ENCODE measurements at regions of chr1 and their contacts with region 1.

Region 1: DNA sequence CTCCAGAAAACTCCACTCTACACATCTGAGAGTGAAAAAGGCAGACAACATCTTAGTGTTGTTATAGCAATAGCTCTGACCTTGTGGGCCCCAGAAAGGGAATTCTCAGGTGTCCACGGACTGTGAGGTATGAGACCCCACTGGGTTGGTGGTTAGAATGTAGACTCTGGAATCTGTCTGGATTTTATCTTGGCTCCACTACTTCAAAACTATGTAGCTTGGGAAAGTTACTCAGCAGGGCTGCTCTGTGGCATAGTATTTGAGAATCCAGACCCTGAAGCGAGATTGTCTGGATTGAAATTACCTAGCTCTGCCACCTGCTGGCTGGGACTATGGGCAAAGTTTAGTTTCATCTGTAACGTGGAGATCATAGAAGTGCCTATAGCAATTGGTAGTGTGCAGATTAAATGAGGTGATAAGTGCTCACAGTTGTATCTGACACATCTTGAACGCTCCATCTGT is 25.8 kb downstream of the PRDM2 start:
- DNase-seq: peak; percentile 77
- ATAC-seq: peak; percentile 60
- H3K4me3 Mint-ChIP-seq: no peak overlapping the region
- H3K27ac Mint-ChIP-seq: peak overlapping the region; percentile 21
- H3K4me1 Mint-ChIP-seq: peaks cover 67% of the 10 kb centered on the region
- H3K27me3 Mint-ChIP-seq: no peaks in the 10 kb centered on the region
- CTCF ChIP-seq: peak; percentile 65

Region 2: DNA sequence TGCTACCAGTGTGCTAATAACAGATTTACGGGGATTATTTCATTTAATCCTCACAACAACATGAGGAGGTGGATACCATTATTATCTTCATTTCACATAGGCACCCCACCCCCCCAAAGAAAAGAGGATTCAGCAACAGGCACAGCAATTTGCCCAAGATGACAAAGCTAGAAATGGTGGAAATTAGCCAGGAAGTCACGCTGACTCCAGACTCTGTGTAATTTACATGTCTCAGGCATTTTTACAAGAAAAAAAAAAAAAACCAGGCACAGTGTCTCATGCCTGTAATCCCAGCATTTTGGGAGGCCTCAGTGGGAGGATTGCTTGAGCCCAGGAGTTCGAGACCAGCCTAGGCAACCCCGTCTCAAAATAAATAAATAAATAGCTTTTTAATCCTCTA is 63.3 kb before region 1 on chr1:
- CTCF ChIA-PET with region 1: interaction called, 14 read pairs
- POLR2A ChIA-PET with region 1: no interaction called
- intact Hi-C with region 1: loop called (anchors 1 kb)
- DNase-seq: no peak
- ATAC-seq: no peak
- H3K4me3 Mint-ChIP-seq: no peak overlapping the region
- H3K27ac Mint-ChIP-seq: no peak overlapping the region
- H3K4me1 Mint-ChIP-seq: peaks cover 6% of the 10 kb centered on the region
- H3K27me3 Mint-ChIP-seq: peaks cover 2% of the 10 kb centered on the region
- CTCF ChIP-seq: no peak

Region 3: GRCh38 chr1:13667691-13668090 is 58.1 kb before region 1 on chr1:
- CTCF ChIA-PET with region 1: interaction called, 14 read pairs
- POLR2A ChIA-PET with region 1: no interaction called
- intact Hi-C with region 1: loop called (anchors 1 kb)
- DNase-seq: no peak
- ATAC-seq: no peak
- H3K4me3 Mint-ChIP-seq: no peak overlapping the region
- H3K27ac Mint-ChIP-seq: no peak overlapping the region
- H3K4me1 Mint-ChIP-seq: peaks cover 6% of the 10 kb centered on the region
- H3K27me3 Mint-ChIP-seq: no peaks in the 10 kb centered on the region
- CTCF ChIP-seq: no peak

Region 4: GRCh38 chr1:13699936-13700520 is 25.7 kb before region 1 on chr1 and contains the start of gene PRDM2:
- CTCF ChIA-PET with region 1: interaction called, 16 read pairs
- POLR2A ChIA-PET with region 1: interaction called, 12 read pairs
- intact Hi-C with region 1: loop called (anchors 2 kb)
- DNase-seq: peak; percentile 64
- ATAC-seq: peak; percentile 51
- H3K4me3 Mint-ChIP-seq: peak within 1 kb of the TSS; percentile 95
- H3K27ac Mint-ChIP-seq: peak within 1 kb of the TSS; percentile 99
- H3K4me1 Mint-ChIP-seq: peaks cover 41% of the 10 kb centered on the region
- H3K27me3 Mint-ChIP-seq: no peaks in the 10 kb centered on the region
- CTCF ChIP-seq: no peak
- total RNA-seq, gene PRDM2: 41.2 to 43.6 TPM

Region 5: DNA sequence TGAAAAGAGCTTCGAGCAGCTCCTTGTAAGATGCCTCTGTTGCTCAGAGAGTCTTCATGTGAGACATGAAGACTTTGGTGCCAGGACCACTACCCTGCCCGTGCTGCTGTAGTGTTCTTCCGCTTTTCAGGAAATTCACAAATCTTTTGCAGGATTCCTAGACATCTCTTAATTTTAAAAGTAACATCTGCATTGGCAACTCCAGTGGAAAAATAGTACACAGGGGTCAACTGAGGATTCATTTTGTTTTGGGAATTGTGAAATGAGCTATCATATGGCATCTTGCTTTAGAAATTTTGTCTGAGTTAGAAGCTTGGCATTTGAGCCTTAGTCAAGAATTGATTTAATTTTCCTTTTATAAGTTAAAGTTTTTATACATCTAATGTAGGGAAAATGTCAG is 18.6 kb before region 1 on chr1:
- CTCF ChIA-PET with region 1: interaction called, 16 read pairs
- POLR2A ChIA-PET with region 1: interaction called, 12 read pairs
- intact Hi-C with region 1: loop called (anchors 2 kb)
- DNase-seq: no peak
- ATAC-seq: no peak
- H3K4me3 Mint-ChIP-seq: no peak overlapping the region
- H3K27ac Mint-ChIP-seq: no peak overlapping the region
- H3K4me1 Mint-ChIP-seq: peaks cover 68% of the 10 kb centered on the region
- H3K27me3 Mint-ChIP-seq: no peaks in the 10 kb centered on the region
- CTCF ChIP-seq: no peak

Region 6: DNA sequence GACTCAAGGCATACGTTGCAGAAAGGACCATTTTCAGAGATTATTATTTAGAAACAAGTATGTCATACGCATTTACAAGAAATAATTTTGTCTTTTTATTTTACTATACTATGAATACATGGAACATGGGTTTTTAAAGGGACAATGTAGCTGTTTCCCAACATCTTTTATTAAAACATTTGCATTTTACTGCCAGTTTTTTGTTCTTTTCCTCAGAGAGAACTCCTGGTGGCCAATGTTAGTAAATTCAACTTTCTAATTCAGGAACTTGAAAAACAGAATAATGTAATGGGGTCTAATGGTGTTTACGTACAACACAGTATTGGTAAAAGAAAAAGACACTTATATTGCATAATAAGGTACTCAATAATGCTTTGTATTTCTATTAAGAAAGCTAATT is 10.9 kb before region 1 on chr1:
- CTCF ChIA-PET with region 1: interaction called, 27 read pairs
- POLR2A ChIA-PET with region 1: interaction called, 4 read pairs
- intact Hi-C with region 1: no loop called
- DNase-seq: no peak
- ATAC-seq: no peak
- H3K4me3 Mint-ChIP-seq: no peak overlapping the region
- H3K27ac Mint-ChIP-seq: no peak overlapping the region
- H3K4me1 Mint-ChIP-seq: peaks cover 61% of the 10 kb centered on the region
- H3K27me3 Mint-ChIP-seq: no peaks in the 10 kb centered on the region
- CTCF ChIP-seq: no peak

Region 7: GRCh38 chr1:13737398-13737797 is 11.7 kb after region 1 on chr1:
- CTCF ChIA-PET with region 1: interaction called, 11 read pairs
- POLR2A ChIA-PET with region 1: interaction called, 3 read pairs
- intact Hi-C with region 1: no loop called
- DNase-seq: peak; percentile 25
- ATAC-seq: peak; percentile 79
- H3K4me3 Mint-ChIP-seq: no peak overlapping the region
- H3K27ac Mint-ChIP-seq: peak overlapping the region; percentile 88
- H3K4me1 Mint-ChIP-seq: peaks cover 60% of the 10 kb centered on the region
- H3K27me3 Mint-ChIP-seq: no peaks in the 10 kb centered on the region
- CTCF ChIP-seq: no peak